Naive thymus-derived CD8-positive, alpha-beta T cell (primary cell): ENCODE measurements at regions of chr22 and their contacts with region 1.

Region 1: GRCh38 chr22:20568989-20569769 is 61.8 kb downstream of the MED15 start:
- DNase-seq: peak; percentile 57 to 96 (median 90)
- ATAC-seq: peak; percentile 72 to 80
- H3K4me3 Mint-ChIP-seq: peak overlapping the region; percentile 72 to 91 (median 84)
- H3K27ac Mint-ChIP-seq: peak overlapping the region; percentile 92 to 99 (median 97)
- H3K4me1 Mint-ChIP-seq: peaks cover 42 to 93% (median 87%) of the 10 kb centered on the region in 4 donors
- H3K27me3 Mint-ChIP-seq: no peaks in the 10 kb centered on the region

Region 2: DNA sequence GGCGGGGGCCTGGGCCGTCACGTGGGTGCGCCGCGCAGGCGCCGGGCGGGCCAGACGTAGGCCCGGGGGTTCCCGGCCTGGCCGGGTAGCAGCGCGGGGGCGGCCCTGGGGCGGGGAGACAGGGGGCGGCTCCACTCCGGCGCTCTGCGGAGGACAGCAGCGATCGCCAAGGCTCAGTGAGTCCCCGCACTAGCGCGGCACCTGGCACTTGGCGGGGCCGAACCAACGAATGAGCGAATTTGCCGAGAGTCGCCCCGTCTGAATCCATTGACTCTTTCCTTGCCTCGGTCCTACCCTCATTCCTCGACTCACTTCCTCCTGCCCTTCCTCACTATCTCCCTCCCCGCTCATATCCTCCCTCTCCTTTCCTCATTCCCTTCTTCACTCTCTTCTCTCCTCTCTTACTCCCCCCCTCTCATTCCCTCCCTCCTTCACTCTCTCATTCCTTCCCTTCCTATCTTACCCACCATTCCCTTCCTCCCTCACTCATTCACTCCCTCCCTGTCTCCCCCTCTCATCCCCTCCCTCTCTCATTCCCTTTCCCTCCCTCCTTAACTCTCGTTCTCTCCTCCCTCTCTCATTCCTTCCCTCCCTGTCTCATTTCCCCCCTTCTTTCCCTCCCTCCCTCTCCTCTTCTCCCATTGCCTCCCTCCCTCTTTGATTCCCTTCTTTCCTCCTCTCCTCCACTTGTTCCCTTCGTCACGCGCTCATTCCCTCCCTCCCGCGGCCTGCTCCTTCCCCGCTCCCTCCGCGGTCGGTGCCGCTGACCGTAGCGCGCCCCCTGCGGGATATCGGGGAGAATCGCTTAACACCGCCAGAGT is 73.1 kb before region 1 on chr22:
- POLR2A ChIA-PET with region 1: interaction called, 11 read pairs
- DNase-seq: peak; percentile 84 to 96 (median 90)
- ATAC-seq: peak; percentile 95 to 96
- H3K4me3 Mint-ChIP-seq: peak overlapping the region; percentile 82 to 97 (median 93)
- H3K27ac Mint-ChIP-seq: peak overlapping the region; percentile 86 to 98 (median 94)
- H3K4me1 Mint-ChIP-seq: peaks cover 30 to 53% (median 47%) of the 10 kb centered on the region in 4 donors
- H3K27me3 Mint-ChIP-seq: no peaks in the 10 kb centered on the region

Region 3: GRCh38 chr22:20507253-20508066 is 61.7 kb before region 1 on chr22 and contains the start of gene MED15:
- POLR2A ChIA-PET with region 1: interaction called, 88 read pairs
- DNase-seq: peak; percentile 76 to 91 (median 84)
- ATAC-seq: peak; percentile 91 to 92
- H3K4me3 Mint-ChIP-seq: peak within 1 kb of the TSS; percentile 94 to 100 (median 97)
- H3K27ac Mint-ChIP-seq: peak within 1 kb of the TSS; percentile 94 to 100 (median 97)
- H3K4me1 Mint-ChIP-seq: peaks cover 35 to 59% (median 53%) of the 10 kb centered on the region in 4 donors
- H3K27me3 Mint-ChIP-seq: no peaks in the 10 kb centered on the region
- polyA plus RNA-seq, gene MED15: 25.4 to 85.2 (median 38.2) TPM

Region 4: GRCh38 chr22:20523086-20523983 is 45.8 kb before region 1 on chr22:
- POLR2A ChIA-PET with region 1: interaction called, 11 read pairs
- DNase-seq: peak in 4 of 10 donors; percentile 9 to 23 (median 17)
- ATAC-seq: peak; percentile 53 to 60
- H3K4me3 Mint-ChIP-seq: peak overlapping the region; percentile 26 to 86 (median 63)
- H3K27ac Mint-ChIP-seq: peak overlapping the region; percentile 87 to 98 (median 94)
- H3K4me1 Mint-ChIP-seq: peaks cover 41 to 75% (median 73%) of the 10 kb centered on the region in 4 donors
- H3K27me3 Mint-ChIP-seq: no peaks in the 10 kb centered on the region

Region 5: DNA sequence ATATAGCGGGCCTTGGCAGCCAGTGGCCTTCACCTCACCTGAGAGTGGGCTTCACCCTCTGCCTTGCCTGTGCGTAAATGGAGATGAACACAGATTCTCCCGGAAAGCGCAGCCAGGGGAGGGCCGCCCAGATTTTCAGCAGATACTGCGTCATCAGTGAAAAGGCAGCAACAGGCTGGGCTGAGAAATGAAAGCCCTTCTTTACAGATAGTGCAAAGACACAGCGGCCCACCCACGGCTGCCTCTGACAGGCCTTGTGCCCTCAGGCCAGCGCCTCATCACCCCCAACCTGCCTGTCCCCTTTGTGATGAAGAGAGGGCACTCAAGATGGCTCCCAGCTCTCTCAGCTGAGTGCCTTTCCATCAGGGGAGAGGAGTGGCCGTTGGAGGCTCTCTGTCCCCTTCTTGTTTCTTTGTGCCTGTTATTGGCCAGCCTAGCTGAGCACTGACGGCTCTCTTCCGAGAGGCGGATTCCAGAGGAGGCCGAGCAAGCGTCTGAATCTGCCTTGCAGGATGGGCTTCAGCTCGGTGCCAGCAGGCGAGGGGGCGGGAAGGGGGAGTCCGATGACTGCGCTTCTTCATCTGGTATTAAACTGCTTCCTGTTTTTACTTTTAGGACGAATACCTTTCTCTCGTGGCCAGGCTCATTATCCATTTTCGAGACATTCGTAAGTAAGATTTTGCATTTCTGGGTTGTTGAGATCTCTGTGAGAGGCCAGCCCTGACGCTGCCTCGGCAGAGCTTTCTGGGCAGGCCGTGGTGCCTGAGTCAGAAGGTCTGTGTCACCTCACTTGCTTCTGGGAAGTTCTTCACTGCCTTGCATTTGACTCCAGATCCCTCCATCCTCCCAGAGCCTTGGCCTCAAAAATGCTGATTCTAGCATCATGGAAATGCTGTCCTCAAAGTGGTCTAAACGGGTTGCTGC is 18.1 kb before region 1 on chr22:
- POLR2A ChIA-PET with region 1: interaction called, 796 read pairs
- DNase-seq: peak; percentile 46 to 84 (median 63)
- ATAC-seq: peak; percentile 55 to 73
- H3K4me3 Mint-ChIP-seq: peak overlapping the region; percentile 75 to 92 (median 86)
- H3K27ac Mint-ChIP-seq: peak overlapping the region; percentile 96 to 100 (median 99)
- H3K4me1 Mint-ChIP-seq: peaks cover 45 to 94% (median 82%) of the 10 kb centered on the region in 4 donors
- H3K27me3 Mint-ChIP-seq: no peaks in the 10 kb centered on the region

Region 6: DNA sequence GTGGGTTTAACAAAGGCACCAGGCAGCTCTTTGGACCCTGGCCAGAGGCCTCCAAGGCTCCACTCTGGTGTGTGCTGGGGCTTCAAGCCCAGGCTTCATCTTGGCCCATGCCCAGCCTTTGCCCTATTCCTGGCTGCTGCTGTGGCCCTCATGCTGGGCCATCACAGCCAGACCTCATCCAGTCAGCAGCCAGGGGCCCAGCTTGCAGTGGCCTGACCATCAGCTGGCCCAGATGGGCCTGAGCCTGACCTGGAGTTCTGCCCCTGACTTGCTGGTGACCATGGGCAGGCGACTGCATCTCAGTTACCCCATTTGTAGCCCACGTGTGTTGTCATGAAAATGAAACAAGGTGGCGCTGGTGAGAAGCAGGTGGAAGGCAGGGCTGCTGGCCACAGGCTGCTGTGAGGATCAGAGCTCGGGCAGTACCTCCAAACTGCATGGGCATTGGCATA is 14.3 kb after region 1 on chr22:
- POLR2A ChIA-PET with region 1: interaction called, 29 read pairs
- DNase-seq: no peak
- ATAC-seq: no peak
- H3K4me3 Mint-ChIP-seq: no peak overlapping the region
- H3K27ac Mint-ChIP-seq: peak overlapping the region in 4 of 10 donors; percentile 25 to 81 (median 50)
- H3K4me1 Mint-ChIP-seq: peaks cover 11 to 35% (median 27%) of the 10 kb centered on the region in 4 donors
- H3K27me3 Mint-ChIP-seq: no peaks in the 10 kb centered on the region